ENCODE measurements at regions of chr22 and their contacts with region 1.

Region 1: DNA sequence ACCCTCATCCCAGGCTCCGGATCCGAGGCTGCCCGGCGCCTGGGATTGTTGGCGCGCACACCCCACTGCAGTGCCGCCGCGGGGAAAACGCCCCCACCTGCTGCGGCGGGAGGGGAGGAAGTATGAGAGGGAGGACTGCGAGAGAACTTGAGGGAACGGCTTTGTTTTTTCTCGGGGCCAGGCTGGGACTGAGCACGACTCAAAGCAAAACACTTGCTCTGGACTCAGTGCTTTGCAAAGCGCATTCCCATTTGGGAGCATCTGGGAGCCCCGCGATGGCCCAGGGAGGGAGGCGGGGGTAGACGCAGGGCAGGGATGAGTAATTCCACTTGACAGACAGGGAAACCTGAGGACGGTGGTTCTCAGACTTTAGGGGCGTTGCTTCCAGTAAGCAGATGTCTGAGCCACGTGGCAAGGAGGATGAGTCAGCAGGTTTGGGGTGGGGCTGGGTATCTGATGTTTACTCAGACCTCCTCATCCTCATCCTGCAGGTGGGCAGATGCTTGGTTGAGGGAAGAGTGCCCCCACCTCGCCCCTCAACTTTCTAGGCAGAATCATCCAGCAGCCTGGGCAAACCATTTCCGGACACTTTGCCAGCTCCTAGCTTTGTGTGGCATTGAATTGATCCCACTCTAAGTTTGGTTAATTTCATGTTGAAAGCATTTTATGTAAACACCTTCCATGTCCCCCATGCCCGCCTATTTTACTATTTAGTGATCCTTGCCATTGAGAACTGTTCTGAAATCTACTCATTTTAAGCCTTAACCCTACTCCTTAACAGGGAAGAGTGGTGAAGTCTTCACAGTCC is 1.5 kb downstream of the MIAT start:
- DNase-seq: peak; percentile 93
- H3K4me3 Mint-ChIP-seq: peak overlapping the region; percentile 94
- H3K27ac Mint-ChIP-seq: peak overlapping the region; percentile 95
- H3K4me1 Mint-ChIP-seq: peaks cover 41% of the 10 kb centered on the region
- H3K27me3 Mint-ChIP-seq: peaks cover 4% of the 10 kb centered on the region

Region 2: DNA sequence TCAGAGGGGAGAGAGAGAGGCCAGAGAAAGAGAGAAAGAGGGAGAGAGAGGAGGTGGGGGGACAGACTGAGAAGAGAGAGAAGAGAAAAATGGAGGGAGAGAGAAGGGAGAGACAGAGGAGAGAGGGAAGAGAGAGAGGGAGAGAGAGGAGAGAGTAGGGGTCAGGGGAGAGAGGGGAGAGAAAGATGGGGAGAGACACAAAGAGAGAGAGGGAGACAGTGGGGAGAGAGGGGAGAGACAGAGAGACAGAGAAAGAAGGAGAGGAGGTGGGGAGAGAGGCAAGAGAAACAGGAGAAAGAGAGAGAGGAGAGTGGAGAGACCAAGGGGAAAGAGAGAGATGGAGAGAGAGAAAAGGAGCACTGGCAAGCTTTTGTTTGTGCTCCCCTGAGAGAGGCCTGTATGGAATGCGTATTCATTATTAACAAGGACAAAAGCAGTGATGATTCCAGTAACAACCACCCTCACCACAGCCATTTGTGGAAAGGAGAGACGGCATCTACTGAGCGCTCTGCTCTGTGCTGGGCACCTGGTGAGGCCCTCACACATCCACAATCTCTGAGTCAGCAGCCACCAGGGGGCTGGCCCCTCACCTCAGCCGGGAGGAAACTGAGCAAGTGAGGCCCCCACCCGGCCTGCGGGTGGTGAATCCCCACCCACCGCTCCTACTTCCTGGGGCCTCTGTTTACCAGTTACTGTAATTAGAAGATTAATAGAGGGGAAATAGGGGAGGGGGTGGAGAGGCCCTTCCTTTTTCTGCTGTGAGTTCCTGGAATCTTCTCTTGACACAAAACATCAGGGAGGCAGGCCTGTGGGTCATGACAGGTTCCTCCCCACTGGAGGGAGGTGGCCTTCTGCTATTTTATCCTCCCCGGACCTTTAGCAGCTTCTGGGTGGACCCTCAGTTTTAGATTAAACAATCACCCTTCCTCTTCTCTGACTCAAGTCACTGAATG is 16.1 kb before region 1 on chr22:
- intact Hi-C with region 1: loop called (anchors 1 kb)
- DNase-seq: peak; percentile 92
- H3K4me3 Mint-ChIP-seq: peak overlapping the region; percentile 74
- H3K27ac Mint-ChIP-seq: peak overlapping the region; percentile 96
- H3K4me1 Mint-ChIP-seq: peaks cover 75% of the 10 kb centered on the region
- H3K27me3 Mint-ChIP-seq: no peaks in the 10 kb centered on the region

Region 3: DNA sequence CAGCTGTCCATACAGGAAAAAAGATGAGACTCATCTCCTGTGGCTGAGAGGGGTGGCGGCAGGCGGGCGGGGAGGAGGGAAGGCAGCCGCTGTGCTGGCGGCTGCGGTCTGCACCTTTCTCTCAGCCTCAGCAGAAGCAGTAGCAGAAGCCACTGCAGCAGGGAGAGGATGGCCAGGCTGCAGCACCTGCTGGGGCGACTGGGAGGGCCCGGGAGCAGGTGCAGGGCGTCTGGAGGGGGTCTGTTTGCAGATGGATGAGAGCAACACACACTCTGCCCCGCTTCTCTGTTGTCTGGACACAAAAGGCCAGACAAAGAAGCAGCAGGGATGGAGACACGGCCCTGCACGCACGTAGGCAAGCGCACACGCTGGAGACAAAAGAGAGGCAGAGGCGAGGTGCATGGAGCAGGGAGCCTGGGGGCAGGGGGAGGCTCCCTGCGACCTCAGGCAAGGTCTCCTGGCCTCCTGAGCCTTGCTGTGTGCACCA is 10.8 kb before region 1 on chr22:
- intact Hi-C with region 1: loop called (anchors 1 kb)
- DNase-seq: peak; percentile 85
- H3K4me3 Mint-ChIP-seq: peak overlapping the region; percentile 77
- H3K27ac Mint-ChIP-seq: peak overlapping the region; percentile 74
- H3K4me1 Mint-ChIP-seq: peaks cover 81% of the 10 kb centered on the region
- H3K27me3 Mint-ChIP-seq: peaks cover 2% of the 10 kb centered on the region

Region 4: GRCh38 chr22:26672590-26673468 is 14.0 kb after region 1 on chr22:
- intact Hi-C with region 1: loop called (anchors 1 kb)
- DNase-seq: peak; percentile 98
- H3K4me3 Mint-ChIP-seq: peak overlapping the region; percentile 95
- H3K27ac Mint-ChIP-seq: peak overlapping the region; percentile 96
- H3K4me1 Mint-ChIP-seq: peaks cover 67% of the 10 kb centered on the region
- H3K27me3 Mint-ChIP-seq: no peaks in the 10 kb centered on the region

Region 5: DNA sequence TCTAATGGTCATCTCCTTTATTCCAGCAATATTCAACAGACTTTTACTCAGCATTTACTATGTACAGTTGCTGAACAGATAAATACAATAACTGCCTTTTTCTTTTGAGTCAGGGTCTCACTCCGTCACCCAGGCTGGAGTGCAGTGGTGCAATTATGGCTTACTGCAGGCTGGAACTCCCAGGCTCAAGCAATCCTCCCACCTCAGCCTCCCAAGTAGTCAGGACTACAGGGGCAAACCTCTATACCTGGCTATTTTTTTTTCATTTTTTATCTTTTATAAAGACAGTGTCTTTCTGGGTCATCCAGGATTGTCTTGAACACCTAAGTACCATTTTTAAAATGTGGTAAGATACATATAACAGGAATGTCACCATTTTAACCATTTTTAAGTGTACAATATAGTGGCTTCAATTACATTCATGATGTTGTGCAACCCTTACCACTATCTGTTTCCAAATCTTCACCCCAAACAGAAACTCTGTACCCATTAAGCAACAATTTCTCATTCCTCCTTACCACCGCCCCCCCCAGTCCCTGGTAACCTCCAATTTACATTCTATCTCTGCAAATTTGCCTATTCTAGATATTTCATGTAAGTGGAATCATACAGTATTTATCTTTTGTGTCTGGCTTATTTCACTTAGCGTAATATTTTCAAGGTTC is 66.3 kb after region 1 on chr22:
- intact Hi-C with region 1: no loop called
- DNase-seq: no peak
- H3K4me3 Mint-ChIP-seq: no peak overlapping the region
- H3K27ac Mint-ChIP-seq: no peak overlapping the region
- H3K4me1 Mint-ChIP-seq: no peaks in the 10 kb centered on the region
- H3K27me3 Mint-ChIP-seq: no peaks in the 10 kb centered on the region